Panc1 (cell line): ENCODE measurements at regions of chr7 and their contacts with region 1.

Region 1: DNA sequence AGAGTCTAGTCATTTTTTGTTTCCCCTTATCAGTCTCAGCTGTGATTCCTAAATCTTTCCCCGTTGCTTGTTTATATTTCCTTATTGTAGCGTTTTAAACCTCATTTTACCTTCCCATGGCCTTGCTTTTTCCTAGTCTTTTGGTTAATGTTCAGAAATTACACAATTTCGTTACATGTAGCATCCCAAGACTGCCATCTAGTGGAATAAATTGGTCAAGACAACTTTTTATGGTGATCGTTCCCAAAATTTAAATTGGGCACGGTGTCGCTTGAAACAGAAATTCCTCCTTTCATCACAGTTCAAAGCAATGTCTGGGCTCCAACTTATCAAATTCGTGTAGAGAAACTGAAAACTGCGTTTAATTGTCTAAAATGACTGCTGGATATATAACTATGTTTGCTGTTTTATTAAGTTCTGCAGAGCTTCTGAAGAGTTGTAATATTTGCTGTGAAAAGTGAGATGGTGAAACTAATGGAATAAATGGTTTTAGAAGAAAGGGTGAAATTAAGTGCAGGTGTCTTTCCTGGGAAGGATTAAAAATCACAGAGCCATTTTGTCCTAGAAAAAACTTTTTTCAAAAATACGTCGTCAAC is 370.2 kb downstream of the PHF14 start:
- DNase-seq: peak; percentile 46
- ATAC-seq: 0 out of 2 replicates have a peak, but pooled peaks have one; percentile 31
- H3K4me3 ChIP-seq: peak overlapping the region in 1 of 2 experiments; percentile 11; a peak in 1 of 4 replicates
- H3K27ac ChIP-seq: no peak overlapping the region
- H3K4me1 ChIP-seq: peaks cover 6% of the 10 kb centered on the region; the same call in 1 of the 2 replicates
- H3K27me3 ChIP-seq: peaks cover 4% of the 10 kb centered on the region; the same call in 1 of the 2 replicates
- CTCF ChIP-seq: peak; percentile 84

Region 2: GRCh38 chr7:10412422-10413019 is 931.4 kb before region 1 on chr7:
- CTCF ChIA-PET with region 1: no interaction called
- POLR2A ChIA-PET with region 1: no interaction called
- in situ Hi-C with region 1: no loop called
- intact Hi-C with region 1: loop called (anchors 10 kb)
- DNase-seq: peak; percentile 15
- ATAC-seq: peak; percentile 78
- H3K4me3 ChIP-seq: no peak overlapping the region
- H3K27ac ChIP-seq: no peak overlapping the region
- H3K4me1 ChIP-seq: no peaks in the 10 kb centered on the region
- H3K27me3 ChIP-seq: no peaks in the 10 kb centered on the region
- CTCF ChIP-seq: peak; percentile 79; the same call in 1 of the 2 replicates

Region 3: GRCh38 chr7:10939911-10940703 is 403.8 kb before region 1 on chr7:
- CTCF ChIA-PET with region 1: no interaction called
- POLR2A ChIA-PET with region 1: no interaction called
- in situ Hi-C with region 1: no loop called
- intact Hi-C with region 1: loop called (anchors 10 kb)
- DNase-seq: peak; percentile 94
- ATAC-seq: peak; percentile 97
- H3K4me3 ChIP-seq: peak overlapping the region; percentile 97 to 99
- H3K27ac ChIP-seq: peak overlapping the region; percentile 98
- H3K4me1 ChIP-seq: peaks cover 15% of the 10 kb centered on the region
- H3K27me3 ChIP-seq: no peaks in the 10 kb centered on the region
- CTCF ChIP-seq: no peak

Region 4: DNA sequence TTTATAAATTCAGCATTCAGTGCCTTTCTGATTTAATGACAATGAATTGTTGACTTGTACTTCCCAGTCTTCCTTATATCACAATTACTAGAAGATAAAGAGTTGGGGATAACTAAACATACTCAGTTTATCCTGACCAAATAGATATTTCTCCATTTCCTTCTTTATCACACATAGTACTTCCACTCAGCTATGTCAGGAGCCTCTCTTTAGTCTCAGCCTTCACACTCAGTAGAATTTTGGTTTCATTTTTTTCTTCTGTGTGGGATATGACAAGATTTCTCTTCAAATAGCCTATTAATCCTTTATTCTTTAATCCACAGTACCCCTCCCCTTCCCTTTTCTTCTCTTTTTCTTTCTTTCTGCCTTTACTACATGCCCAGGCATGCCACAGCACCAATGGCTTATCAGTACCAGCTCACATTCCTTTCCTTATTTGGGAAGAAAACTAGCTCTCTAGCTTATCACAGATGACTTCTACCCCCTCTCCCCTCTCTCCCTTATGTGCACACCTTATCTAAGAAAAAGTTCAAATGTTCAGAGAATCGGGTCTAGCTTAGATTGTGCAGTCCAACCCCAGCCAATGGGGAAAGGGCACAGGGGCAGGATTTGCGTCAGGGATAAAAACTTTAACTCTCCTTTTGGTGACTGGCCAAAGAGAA is 261.2 kb before region 1 on chr7:
- CTCF ChIA-PET with region 1: no interaction called
- POLR2A ChIA-PET with region 1: no interaction called
- in situ Hi-C with region 1: no loop called
- intact Hi-C with region 1: loop called (anchors 10 kb)
- DNase-seq: no peak
- ATAC-seq: no peak
- H3K4me3 ChIP-seq: no peak overlapping the region
- H3K27ac ChIP-seq: no peak overlapping the region
- H3K4me1 ChIP-seq: no peaks in the 10 kb centered on the region
- H3K27me3 ChIP-seq: no peaks in the 10 kb centered on the region
- CTCF ChIP-seq: no peak

Region 5: GRCh38 chr7:11153694-11154093 is 190.2 kb before region 1 on chr7:
- CTCF ChIA-PET with region 1: no interaction called
- POLR2A ChIA-PET with region 1: no interaction called
- in situ Hi-C with region 1: no loop called
- intact Hi-C with region 1: loop called (anchors 10 kb)
- DNase-seq: no peak
- ATAC-seq: no peak
- H3K4me3 ChIP-seq: no peak overlapping the region
- H3K27ac ChIP-seq: no peak overlapping the region
- H3K4me1 ChIP-seq: no peaks in the 10 kb centered on the region
- H3K27me3 ChIP-seq: no peaks in the 10 kb centered on the region
- CTCF ChIP-seq: peak; percentile 25; the same call in 1 of the 2 replicates

Region 6: DNA sequence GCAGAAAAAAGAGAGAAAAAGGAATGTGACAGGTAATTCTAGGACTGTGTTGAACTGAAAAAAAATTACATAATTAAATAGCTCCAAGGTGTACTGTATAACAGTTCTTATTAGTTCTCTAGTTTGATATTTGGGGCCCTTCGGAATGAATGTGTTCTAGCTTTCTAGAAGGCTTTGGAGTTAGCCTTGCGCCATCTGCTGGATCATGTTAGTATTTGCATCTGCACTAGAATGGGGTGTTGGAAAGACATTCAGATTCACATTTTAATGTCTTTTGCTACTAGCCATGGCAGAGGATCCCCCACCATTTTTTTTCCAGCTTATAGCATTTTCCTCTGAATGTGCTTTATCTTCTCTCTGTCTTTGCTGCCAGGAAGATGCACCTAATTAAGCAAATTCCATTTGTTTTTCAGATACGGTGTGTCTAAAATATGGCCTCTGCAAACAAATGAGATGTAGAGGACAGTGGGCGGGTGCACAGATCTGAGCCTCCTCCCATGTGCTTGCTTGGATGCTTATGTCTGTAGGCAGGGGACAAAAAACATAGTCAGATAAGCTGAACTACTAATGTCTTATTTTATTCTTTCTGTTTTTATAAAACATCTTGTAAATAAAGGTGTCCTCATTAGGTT is 131.7 kb before region 1 on chr7:
- CTCF ChIA-PET with region 1: no interaction called
- POLR2A ChIA-PET with region 1: no interaction called
- in situ Hi-C with region 1: no loop called
- intact Hi-C with region 1: loop called (anchors 5 kb)
- DNase-seq: peak; percentile 39
- ATAC-seq: peak; percentile 91
- H3K4me3 ChIP-seq: no peak overlapping the region
- H3K27ac ChIP-seq: no peak overlapping the region
- H3K4me1 ChIP-seq: no peaks in the 10 kb centered on the region
- H3K27me3 ChIP-seq: no peaks in the 10 kb centered on the region; the same call in 1 of the 2 replicates
- CTCF ChIP-seq: peak; percentile 89